SK-MEL-5 (cell line): ENCODE measurements at regions of chr6 and their contacts with region 1.

Region 1: DNA sequence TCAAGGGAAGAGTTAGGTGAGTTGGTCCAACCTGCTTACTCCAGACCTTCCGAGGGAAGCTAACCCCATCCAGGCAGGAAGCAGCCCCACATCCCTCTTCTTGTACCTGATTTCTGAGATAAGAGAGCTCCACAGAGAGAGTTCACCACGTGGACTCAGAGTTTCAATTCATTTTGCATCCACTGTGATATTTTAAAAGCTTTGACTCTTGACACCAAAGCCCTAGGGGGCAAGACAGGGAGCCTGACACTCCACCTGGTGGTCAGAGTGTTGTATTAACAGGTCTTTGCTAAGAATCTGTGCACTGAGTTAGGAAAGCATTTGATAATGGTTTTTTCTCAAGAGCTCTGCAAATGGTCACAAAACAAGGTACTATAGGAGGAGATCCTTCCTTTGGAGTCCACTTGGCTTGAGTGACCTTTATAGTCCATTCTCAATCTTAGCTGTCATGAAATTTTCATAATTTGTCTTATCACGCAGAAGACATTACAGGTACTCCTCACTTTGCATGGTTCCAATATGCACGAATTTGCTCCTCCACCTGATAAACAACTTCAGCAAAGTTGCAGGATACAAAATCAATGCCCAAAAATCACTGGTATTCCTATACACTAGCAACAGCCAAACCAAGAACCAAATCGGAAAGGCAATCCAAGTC is 56.2 kb upstream of the RIPOR2 start:
- DNase-seq: peak; percentile 83

Region 2: GRCh38 chr6:24933868-24934401 is 58.0 kb before region 1 on chr6:
- in situ Hi-C with region 1: loop called (anchors 10 kb)
- DNase-seq: peak; percentile 85

Region 3: DNA sequence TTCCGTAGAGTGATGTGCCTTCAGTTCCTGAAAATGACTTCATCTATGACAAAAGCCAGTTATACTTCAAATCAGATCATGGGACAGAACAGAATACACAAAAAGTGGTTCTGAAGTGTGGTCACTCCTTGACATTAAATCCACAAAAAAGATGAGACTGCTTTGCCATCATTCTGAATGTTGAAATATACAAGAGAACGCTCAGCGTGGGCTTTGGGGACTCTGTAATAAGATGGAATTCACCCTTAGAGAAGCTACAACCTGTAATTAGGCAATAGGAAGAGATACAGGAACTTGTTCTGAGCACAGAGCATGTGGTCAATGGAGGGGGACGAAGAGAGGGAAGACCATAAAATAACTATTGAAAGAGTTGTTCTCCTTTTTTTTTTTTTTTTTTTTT is 471.5 kb after region 1 on chr6:
- in situ Hi-C with region 1: no loop called
- DNase-seq: no peak